Sigmoid colon (tissue), 7 donors: ENCODE measurements at regions of chr18 and their contacts with region 1.

Region 1: GRCh38 chr18:48573632-48574283 is 34.9 kb downstream of the CTIF start:
- DNase-seq: no peak
- H3K4me3 ChIP-seq: no peak overlapping the region
- H3K27ac ChIP-seq: no peak overlapping the region
- H3K4me1 ChIP-seq: peaks cover 0 to 35% (median 25%) of the 10 kb centered on the region in 4 donors
- H3K27me3 ChIP-seq: no peaks in the 10 kb centered on the region
- CTCF ChIP-seq: no peak
- EP300 ChIP-seq: no peak
- POLR2A ChIP-seq: no peak

Region 2: GRCh38 chr18:48605408-48605845 is 31.7 kb after region 1 on chr18:
- intact Hi-C with region 1: loop called (anchors 5 kb)
- DNase-seq: no peak
- H3K4me3 ChIP-seq: no peak overlapping the region
- H3K27ac ChIP-seq: no peak overlapping the region
- H3K4me1 ChIP-seq: peaks cover 0 to 47% (median 23%) of the 10 kb centered on the region in 4 donors
- H3K27me3 ChIP-seq: no peaks in the 10 kb centered on the region
- CTCF ChIP-seq: no peak
- EP300 ChIP-seq: no peak
- POLR2A ChIP-seq: no peak